WTC11 (cell line): ENCODE measurements at regions of chr10 and their contacts with region 1.

Region 1: GRCh38 chr10:121598207-121598862 is at the start of gene FGFR2:
- DNase-seq: peak; percentile 89
- ATAC-seq: peak; percentile 77
- H3K4me3 Mint-ChIP-seq: peak within 1 kb of the TSS; percentile 99
- H3K27ac Mint-ChIP-seq: peak within 1 kb of the TSS; percentile 99
- H3K4me1 Mint-ChIP-seq: peaks cover 60% of the 10 kb centered on the region
- H3K27me3 Mint-ChIP-seq: peaks cover 4% of the 10 kb centered on the region; the same call in 1 of the 2 replicates
- CTCF ChIP-seq: no peak
- total RNA-seq, gene FGFR2: 88.6 to 95.0 TPM (median 90.4 TPM) in 3 replicates

Region 2: GRCh38 chr10:121558238-121558637 is 40.1 kb before region 1 on chr10:
- CTCF ChIA-PET with region 1: interaction called, 3 read pairs
- POLR2A ChIA-PET with region 1: interaction called, 11 read pairs
- DNase-seq: no peak
- ATAC-seq: no peak
- H3K4me3 Mint-ChIP-seq: no peak overlapping the region
- H3K27ac Mint-ChIP-seq: peak overlapping the region; percentile 69; the same call in 1 of the 2 replicates
- H3K4me1 Mint-ChIP-seq: peaks cover 74% of the 10 kb centered on the region
- H3K27me3 Mint-ChIP-seq: no peaks in the 10 kb centered on the region
- CTCF ChIP-seq: no peak

Region 3: GRCh38 chr10:121580276-121581116 is 17.8 kb before region 1 on chr10:
- CTCF ChIA-PET with region 1: interaction called, 6 read pairs
- POLR2A ChIA-PET with region 1: interaction called, 17 read pairs
- DNase-seq: peak; percentile 80
- ATAC-seq: peak; percentile 83
- H3K4me3 Mint-ChIP-seq: peak overlapping the region; percentile 57
- H3K27ac Mint-ChIP-seq: peak overlapping the region; percentile 99
- H3K4me1 Mint-ChIP-seq: peaks cover 85% of the 10 kb centered on the region
- H3K27me3 Mint-ChIP-seq: no peaks in the 10 kb centered on the region
- CTCF ChIP-seq: no peak

Region 4: DNA sequence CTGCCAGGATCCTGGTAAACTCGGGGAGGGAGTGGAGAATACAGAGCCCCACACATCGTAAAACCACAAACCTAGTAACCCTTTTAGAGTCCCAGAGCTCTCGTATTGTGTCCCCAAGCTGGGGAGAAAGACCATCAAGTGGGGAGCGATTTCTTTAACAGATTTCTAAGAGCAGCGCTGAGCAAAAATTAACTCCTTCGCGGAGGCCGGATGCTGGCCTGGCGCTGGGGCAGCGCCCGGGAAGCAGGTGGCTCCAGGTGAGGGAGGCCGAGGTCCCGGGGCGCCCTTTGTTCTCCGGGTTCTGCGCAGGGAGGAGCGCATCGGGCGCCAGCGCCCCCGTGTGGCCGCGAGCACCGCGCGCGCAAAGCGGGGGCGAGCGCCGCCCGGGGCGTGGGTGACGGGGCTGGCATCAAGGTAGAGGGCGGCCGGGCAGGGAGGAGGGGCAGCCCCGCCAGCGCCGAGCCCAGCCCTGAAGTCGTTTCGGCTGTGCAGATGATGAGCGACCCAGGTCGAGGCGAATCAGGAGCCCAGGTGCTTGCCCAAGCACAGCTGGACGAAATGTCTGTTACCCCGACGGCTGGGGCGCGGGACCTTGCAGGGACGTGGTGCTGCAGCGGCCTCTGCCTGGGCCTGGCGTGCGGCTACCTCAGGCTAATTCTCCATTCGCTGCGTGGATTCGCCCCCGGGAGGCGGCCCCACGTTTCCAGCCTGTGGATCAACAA is 10.3 kb after region 1 on chr10:
- CTCF ChIA-PET with region 1: interaction called, 22 read pairs
- POLR2A ChIA-PET with region 1: interaction called, 3 read pairs
- DNase-seq: peak; percentile 72
- ATAC-seq: peak; percentile 81
- H3K4me3 Mint-ChIP-seq: peak overlapping the region; percentile 40; the same call in 1 of the 2 replicates
- H3K27ac Mint-ChIP-seq: no peak overlapping the region
- H3K4me1 Mint-ChIP-seq: peaks cover 34% of the 10 kb centered on the region
- H3K27me3 Mint-ChIP-seq: peaks cover 16% of the 10 kb centered on the region
- CTCF ChIP-seq: peak; percentile 93

Region 5: DNA sequence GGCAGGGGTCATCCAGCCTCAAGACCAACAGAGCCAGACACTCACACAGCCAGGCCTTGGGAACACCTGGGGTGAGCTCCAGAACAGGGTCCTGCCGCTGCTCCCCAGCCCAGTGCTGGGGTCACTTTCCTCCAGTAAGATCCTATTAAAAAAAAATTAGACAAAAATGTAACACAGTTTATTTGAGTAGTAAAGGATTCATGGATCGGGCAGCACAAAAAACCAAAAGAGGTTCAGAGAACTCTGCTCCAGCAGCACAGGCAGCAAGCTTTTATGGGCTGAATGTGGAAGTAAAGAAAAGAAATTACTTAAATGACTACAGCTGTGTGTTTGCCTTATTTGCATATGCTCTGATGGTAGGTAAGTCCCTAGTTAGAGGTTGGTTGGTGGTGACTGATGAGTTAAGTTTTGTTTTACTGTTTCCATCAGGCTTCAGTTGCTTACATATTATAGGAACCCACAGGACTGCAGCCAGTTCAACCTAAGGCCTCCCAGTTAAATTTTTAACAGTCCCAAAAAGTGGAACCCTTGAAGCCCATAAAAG is 80.4 kb after region 1 on chr10:
- CTCF ChIA-PET with region 1: no interaction called
- POLR2A ChIA-PET with region 1: no interaction called
- DNase-seq: no peak
- ATAC-seq: no peak
- H3K4me3 Mint-ChIP-seq: no peak overlapping the region
- H3K27ac Mint-ChIP-seq: no peak overlapping the region
- H3K4me1 Mint-ChIP-seq: peaks cover 15% of the 10 kb centered on the region
- H3K27me3 Mint-ChIP-seq: no peaks in the 10 kb centered on the region; the same call in 1 of the 2 replicates
- CTCF ChIP-seq: no peak